Posterior vena cava (tissue), 2 donors: ENCODE measurements at regions of chr19 and their contacts with region 1.

Region 1: DNA sequence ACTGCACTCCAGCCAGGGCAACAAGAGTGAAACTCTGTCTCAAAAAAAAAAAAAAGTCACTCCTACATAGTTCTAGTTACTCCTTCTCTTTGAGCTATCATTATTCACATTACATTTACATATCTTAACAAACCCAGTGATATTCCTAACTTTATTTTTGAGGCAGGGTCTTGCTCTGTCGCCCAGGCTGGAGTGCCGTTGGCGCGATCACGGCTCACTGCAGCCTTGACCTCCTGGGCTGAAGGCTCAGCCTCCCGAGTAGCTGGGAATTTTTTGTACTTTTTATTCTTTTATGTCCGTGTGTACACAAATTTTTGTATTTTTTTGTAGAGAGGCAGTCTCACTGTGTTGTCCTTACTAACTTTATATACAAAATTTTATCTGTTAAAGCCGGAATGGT is 587 bp upstream of the RPS15 start:
- DNase-seq: no peak

Region 2: GRCh38 chr19:1495799-1496713 is 58.4 kb after region 1 on chr19:
- intact Hi-C with region 1: no loop called
- DNase-seq: no peak

Region 3: DNA sequence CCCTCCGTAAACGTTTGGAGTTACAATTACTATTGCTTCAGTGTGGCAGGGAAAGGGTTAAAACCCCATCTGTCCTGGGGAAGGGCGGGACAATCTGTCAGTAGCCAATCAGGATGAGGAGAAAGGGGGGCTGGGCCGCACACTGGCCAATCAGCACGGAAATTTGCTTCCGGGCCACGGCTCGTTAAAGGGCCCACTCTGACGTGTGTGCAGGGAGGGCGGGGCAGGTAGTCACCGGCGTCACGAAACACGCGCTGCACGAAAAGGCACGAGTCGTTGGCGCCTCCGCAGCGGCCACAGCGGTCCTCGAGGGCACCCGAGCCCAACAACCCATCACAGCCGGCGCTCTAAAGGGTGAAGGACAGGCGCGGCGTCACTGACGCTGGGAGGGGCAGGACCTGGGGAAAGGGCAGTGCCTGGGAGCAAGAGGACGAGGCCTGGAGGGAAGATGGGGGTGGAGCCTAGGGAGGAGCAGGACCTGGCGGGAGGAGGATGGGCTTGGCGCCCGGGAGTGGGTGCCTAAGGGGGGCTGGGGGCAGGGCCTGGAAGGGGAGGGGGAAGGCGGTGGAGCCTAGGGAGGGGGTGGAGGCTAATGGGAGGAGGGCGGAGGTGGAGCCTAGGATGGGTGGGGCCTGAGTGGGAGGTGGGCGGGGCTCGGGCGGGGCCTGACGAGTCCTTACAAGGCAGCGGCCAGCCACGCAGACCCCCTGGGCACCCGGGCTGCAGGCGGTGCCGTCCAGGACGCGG is 70.3 kb after region 1 on chr19:
- intact Hi-C with region 1: loop called in 1 of 2 experiments (anchors 2 kb)
- DNase-seq: peak; percentile 97